ENCODE measurements at regions of chr2 and their contacts with region 1.

Region 1: DNA sequence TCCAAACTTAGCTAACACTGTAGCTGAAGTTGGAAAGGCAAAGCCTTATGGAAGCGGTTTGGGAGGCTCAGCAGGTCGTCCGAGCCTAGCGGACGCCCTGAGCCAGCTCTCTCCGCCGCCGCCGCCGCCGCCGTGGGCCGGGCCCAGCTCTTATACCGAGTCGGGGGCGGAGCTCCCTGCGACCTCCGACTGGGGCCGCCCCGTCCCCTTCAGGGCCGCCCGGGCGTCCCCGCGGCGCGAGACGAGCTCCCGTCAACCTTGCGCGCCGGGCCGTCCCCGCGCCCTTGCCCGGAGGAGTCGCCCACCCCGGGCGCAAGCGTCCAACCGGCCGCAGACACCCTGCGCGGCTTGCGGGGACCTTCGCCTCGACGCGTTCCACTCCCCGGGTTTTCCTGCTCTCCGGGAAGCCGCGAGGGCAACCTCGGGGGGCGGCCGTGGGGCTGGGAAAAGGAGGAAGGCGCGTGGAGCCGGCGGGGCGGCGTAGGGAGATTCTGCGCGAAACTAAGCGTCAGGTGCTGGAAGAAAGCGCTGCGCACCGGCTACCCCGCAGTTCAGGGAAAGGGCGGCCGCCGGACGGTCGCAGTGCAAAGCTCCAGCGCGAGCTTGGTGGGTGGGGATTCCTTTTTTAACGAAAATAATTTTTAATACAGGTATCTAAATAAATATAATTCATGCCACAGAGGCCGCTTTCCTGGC is at the start of gene SLC40A1:
- DNase-seq: peak; percentile 54 to 75 (median 66)
- ATAC-seq: peak; percentile 96
- H3K4me3 ChIP-seq: peak within 1 kb of the TSS; percentile 79
- H3K4me3 Mint-ChIP-seq: peak within 1 kb of the TSS; percentile 83 to 100 (median 93)
- H3K27ac ChIP-seq: peak within 1 kb of the TSS; percentile 80
- H3K27ac Mint-ChIP-seq: peak within 1 kb of the TSS; percentile 30 to 98 (median 87)
- H3K4me1 ChIP-seq: peaks cover 0 to 12% of the 10 kb centered on the region in 2 donors
- H3K4me1 Mint-ChIP-seq: peaks cover 24 to 63% (median 56%) of the 10 kb centered on the region in 7 donors
- H3K27me3 ChIP-seq: peaks cover 0 to 5% of the 10 kb centered on the region in 2 donors
- H3K27me3 Mint-ChIP-seq: peaks cover 0 to 47% (median 0%) of the 10 kb centered on the region in 5 donors
- total RNA-seq, gene SLC40A1: 4.2 to 38.0 (median 24.4) TPM

Region 2: GRCh38 chr2:189188115-189188805 is 392.5 kb before region 1 on chr2:
- CTCF ChIA-PET with region 1: no interaction called
- POLR2A ChIA-PET with region 1: no interaction called
- intact Hi-C with region 1: no loop called
- DNase-seq: no peak
- ATAC-seq: no peak
- H3K4me3 ChIP-seq: no peak overlapping the region
- H3K4me3 Mint-ChIP-seq: no peak overlapping the region
- H3K27ac ChIP-seq: no peak overlapping the region
- H3K27ac Mint-ChIP-seq: no peak overlapping the region
- H3K4me1 ChIP-seq: no peaks in the 10 kb centered on the region
- H3K4me1 Mint-ChIP-seq: peaks cover 0 to 1% (median 0%) of the 10 kb centered on the region in 7 donors
- H3K27me3 ChIP-seq: no peaks in the 10 kb centered on the region
- H3K27me3 Mint-ChIP-seq: no peaks in the 10 kb centered on the region

Region 3: GRCh38 chr2:189466660-189467059 is 114.1 kb before region 1 on chr2:
- CTCF ChIA-PET with region 1: no interaction called
- POLR2A ChIA-PET with region 1: interaction called, 3 read pairs
- intact Hi-C with region 1: loop called in 1 of 2 experiments (anchors 2 kb)
- DNase-seq: peak in 6 of 9 donors; percentile 4 to 34 (median 20)
- ATAC-seq: peak; percentile 60
- H3K4me3 ChIP-seq: no peak overlapping the region
- H3K4me3 Mint-ChIP-seq: no peak overlapping the region
- H3K27ac ChIP-seq: no peak overlapping the region
- H3K27ac Mint-ChIP-seq: peak overlapping the region in 5 of 9 donors; percentile 12 to 59 (median 32)
- H3K4me1 ChIP-seq: no peaks in the 10 kb centered on the region
- H3K4me1 Mint-ChIP-seq: peaks cover 0 to 5% (median 0%) of the 10 kb centered on the region in 7 donors
- H3K27me3 ChIP-seq: no peaks in the 10 kb centered on the region
- H3K27me3 Mint-ChIP-seq: no peaks in the 10 kb centered on the region

Region 4: DNA sequence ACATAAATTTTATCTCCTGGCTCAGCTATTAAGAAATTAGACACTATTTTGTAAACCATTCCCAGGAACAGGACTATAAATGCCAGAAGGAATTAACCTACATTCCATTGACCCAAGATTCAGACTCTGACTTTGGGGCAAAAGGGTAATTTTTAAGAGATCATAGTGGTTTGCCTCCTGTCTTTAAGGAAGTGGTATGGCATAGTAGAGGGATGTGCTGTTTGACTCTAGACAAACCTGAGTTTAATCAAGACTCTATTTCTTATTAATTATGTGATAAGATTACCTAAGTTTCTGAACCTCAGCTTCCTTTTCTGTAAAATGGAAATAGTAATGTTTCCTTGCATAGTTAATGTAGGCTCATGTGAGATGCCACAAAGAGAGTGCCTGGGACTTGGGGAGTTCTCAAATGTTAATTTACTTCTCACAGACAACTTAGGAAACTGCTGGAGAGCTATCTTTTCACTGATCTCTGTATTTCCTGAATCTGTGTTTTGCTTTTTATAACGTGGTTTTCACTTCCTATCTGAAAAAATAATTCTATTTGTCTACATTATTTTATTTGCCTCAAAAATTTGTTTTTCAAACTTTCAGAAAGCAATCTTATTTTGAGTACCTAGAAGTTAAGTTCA is 11.7 kb after region 1 on chr2:
- CTCF ChIA-PET with region 1: no interaction called
- POLR2A ChIA-PET with region 1: interaction called, 34 read pairs
- intact Hi-C with region 1: loop called in 1 of 2 experiments (anchors 1 kb)
- DNase-seq: peak in 3 of 9 donors; percentile 4 to 13 (median 5)
- ATAC-seq: peak; percentile 46
- H3K4me3 ChIP-seq: no peak overlapping the region
- H3K4me3 Mint-ChIP-seq: peak overlapping the region in 9 of 10 donors; percentile 18 to 75 (median 61)
- H3K27ac ChIP-seq: peak overlapping the region; percentile 15
- H3K27ac Mint-ChIP-seq: peak overlapping the region in 8 of 9 donors; percentile 11 to 85 (median 72)
- H3K4me1 ChIP-seq: peaks cover 5 to 29% of the 10 kb centered on the region in 2 donors
- H3K4me1 Mint-ChIP-seq: peaks cover 13 to 55% (median 37%) of the 10 kb centered on the region in 7 donors
- H3K27me3 ChIP-seq: no peaks in the 10 kb centered on the region
- H3K27me3 Mint-ChIP-seq: peaks cover 0 to 3% (median 0%) of the 10 kb centered on the region in 5 donors

Region 5: GRCh38 chr2:189698020-189698887 is 117.4 kb after region 1 on chr2:
- CTCF ChIA-PET with region 1: no interaction called
- POLR2A ChIA-PET with region 1: interaction called, 8 read pairs
- intact Hi-C with region 1: loop called in 1 of 2 experiments (anchors 2 kb)
- DNase-seq: peak in 7 of 9 donors; percentile 25 to 55 (median 51)
- ATAC-seq: peak; percentile 84
- H3K4me3 ChIP-seq: no peak overlapping the region
- H3K4me3 Mint-ChIP-seq: peak overlapping the region in 6 of 10 donors; percentile 2 to 44 (median 21)
- H3K27ac ChIP-seq: no peak overlapping the region
- H3K27ac Mint-ChIP-seq: peak overlapping the region in 4 of 9 donors; percentile 15 to 72 (median 49)
- H3K4me1 ChIP-seq: no peaks in the 10 kb centered on the region
- H3K4me1 Mint-ChIP-seq: peaks cover 0 to 8% (median 4%) of the 10 kb centered on the region in 7 donors
- H3K27me3 ChIP-seq: no peaks in the 10 kb centered on the region
- H3K27me3 Mint-ChIP-seq: no peaks in the 10 kb centered on the region

Region 6: GRCh38 chr2:189783927-189784867 is 203.4 kb after region 1 on chr2 and contains the starts of genes ORMDL1 and PMS1:
- CTCF ChIA-PET with region 1: no interaction called
- POLR2A ChIA-PET with region 1: interaction called, 3 read pairs
- intact Hi-C with region 1: loop called in 1 of 2 experiments (anchors 1 kb)
- DNase-seq: peak; percentile 90 to 96 (median 94)
- ATAC-seq: peak; percentile 95
- H3K4me3 ChIP-seq: peak within 1 kb of the TSS; percentile 76
- H3K4me3 Mint-ChIP-seq: peak within 1 kb of the TSS; percentile 86 to 97 (median 94)
- H3K27ac ChIP-seq: peak within 1 kb of the TSS; percentile 92
- H3K27ac Mint-ChIP-seq: peak within 1 kb of the TSS; percentile 89 to 97 (median 95)
- H3K4me1 ChIP-seq: peaks cover 21 to 24% of the 10 kb centered on the region in 2 donors
- H3K4me1 Mint-ChIP-seq: peaks cover 26 to 72% (median 57%) of the 10 kb centered on the region in 7 donors
- H3K27me3 ChIP-seq: no peaks in the 10 kb centered on the region
- H3K27me3 Mint-ChIP-seq: no peaks in the 10 kb centered on the region
- total RNA-seq, gene ORMDL1: 80.1 to 208 (median 142) TPM
- total RNA-seq, gene PMS1: 18.2 to 30.1 (median 22.5) TPM